Activated T-helper 1 cell treated with anti-CD3 and anti-CD28 coated beads, Interleukin-12 subunit alpha, Interleukin-12 subunit beta, Interleukin-2, Interleukin-4 antibody, amounts not matched to agents 30 ng/mL and 10 ng/mL and 1 ng/mL, durations not matched to agents 14 hours and 24 hours and 36 hours (primary cell): ENCODE measurements at regions of chr2 and their contacts with region 1.

Region 1: DNA sequence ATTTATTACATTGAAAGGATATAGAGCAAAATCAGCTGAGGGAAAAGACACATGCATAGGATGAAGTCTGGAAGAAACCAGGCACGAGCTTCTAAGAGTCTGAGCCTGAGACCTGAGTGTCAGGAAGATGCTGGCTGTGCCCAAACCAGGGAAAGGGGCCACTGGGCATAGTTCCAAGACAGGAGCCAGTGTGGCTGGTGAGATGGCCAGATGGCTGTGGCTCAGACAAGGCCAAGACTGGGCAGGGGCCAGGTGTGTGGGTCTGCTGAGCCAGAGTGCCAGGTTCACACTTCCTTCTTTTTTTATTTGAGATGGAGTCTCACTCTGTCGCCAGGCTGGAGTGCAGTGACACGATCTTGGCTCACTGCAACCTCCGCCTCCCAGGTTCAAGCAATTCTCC is 95.5 kb upstream of the ATG16L1 start:
- DNase-seq: no peak
- H3K4me3 Mint-ChIP-seq: no peak overlapping the region
- H3K27ac Mint-ChIP-seq: no peak overlapping the region
- H3K4me1 Mint-ChIP-seq: no peaks in the 10 kb centered on the region
- H3K27me3 Mint-ChIP-seq: no peaks in the 10 kb centered on the region

Region 2: DNA sequence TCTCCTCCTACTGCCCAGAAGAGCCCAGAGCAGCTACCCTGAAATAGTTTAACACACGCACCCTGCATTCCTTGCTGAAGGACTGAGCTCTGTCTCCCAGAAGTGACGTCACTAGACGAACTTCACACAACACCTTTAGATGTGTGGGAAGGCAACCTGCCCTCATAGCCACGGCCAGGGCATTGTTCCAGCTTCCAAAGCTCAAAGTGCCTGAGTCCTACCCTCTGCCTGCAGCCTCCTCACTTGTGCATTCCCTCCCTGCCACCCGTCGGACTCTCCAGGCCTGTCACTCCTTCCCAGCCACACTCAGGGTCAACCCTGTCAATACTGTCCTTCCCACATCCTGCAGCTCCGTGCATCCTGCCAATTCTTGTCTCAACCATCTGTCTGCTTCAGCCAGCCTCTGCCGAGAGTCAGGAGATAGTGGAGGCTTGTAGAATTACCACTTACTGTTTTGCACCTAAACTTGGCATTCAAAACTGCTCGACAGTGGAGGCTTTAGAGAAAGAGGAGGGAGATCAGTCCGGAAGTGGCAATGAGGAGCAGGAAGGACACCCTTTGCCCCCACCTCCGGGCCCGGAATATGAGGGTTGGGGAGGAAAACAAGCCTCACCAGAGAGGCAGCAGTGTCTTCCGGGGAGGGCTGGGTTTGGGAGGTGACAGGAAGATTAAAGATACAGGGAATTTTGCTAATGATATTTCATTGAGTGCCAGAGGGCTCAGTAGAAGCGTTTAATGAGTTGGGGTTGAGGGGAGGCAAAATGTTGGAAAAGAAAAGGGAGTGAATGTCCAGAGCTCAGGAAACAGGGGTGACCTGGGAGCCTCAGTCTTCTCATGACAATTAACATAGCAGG is 23.2 kb after region 1 on chr2:
- intact Hi-C with region 1: loop called (anchors 2 kb)
- DNase-seq: no peak
- H3K4me3 Mint-ChIP-seq: no peak overlapping the region
- H3K27ac Mint-ChIP-seq: no peak overlapping the region
- H3K4me1 Mint-ChIP-seq: no peaks in the 10 kb centered on the region
- H3K27me3 Mint-ChIP-seq: no peaks in the 10 kb centered on the region

Region 3: DNA sequence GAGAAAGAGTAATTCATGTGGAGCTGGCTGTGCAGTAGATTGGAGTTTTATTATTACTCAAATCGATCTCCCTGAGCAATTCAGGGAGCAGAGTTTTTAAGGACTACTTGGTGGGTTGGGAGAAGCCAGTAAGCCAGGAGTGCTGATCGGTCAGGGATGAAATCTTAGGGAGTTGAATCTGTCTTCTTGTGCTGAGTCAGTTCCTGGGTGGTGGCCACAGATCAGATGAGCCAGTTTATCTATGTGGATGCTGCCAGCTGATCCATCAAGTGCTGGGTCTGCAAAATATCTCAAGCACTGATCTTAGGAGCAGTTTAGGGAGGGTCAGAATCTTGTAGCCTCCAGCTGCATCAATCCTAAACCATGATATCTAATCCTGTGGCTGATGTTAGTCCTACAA is 444.4 kb after region 1 on chr2:
- intact Hi-C with region 1: no loop called
- DNase-seq: no peak
- H3K4me3 Mint-ChIP-seq: no peak overlapping the region
- H3K27ac Mint-ChIP-seq: no peak overlapping the region
- H3K4me1 Mint-ChIP-seq: no peaks in the 10 kb centered on the region
- H3K27me3 Mint-ChIP-seq: peaks cover 14% of the 10 kb centered on the region